A673 (cell line): ENCODE measurements at regions of chr15 and their contacts with region 1.

Region 1: DNA sequence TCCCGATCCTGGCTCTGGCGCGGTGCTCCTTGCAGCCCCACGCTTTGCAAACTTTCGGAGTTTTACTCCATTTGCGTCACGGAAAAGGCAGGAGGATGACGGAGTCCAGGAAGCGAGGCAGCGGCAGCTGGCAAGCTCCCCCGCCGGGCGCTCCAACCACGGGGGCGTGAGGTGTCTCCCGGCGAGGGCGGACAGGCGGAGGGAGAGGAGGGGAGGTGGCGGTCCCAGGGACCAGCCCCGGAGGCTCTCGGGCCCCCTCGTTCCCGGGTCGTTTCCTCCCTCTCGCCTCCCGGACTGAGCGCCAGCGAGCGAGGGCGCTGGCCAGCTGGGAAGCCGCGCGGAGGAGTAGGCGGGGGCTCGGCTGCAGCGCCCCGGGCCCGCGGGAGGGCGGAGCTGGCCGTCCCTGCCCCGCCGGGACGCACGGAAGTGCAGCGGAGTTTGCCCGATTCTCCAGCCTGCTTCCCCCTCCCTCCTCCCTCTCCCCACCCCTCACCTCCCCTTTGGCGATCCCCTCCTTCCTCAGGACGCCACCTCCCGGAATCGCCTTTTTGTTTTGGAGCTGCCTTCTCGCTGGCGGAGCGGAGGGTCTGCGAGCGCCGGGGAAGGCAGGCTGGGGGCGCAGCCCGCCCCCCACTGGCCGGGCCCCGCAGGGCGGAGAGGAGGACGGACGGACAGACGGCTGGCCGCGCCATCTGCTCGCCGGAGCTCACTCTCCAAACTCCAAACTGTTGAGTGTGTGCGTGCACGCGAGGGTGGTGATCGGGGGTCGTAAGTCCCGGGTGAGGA is at the start of gene SNX33:
- DNase-seq: peak; percentile 77
- H3K4me3 ChIP-seq: peak within 1 kb of the TSS; percentile 96
- H3K27ac ChIP-seq: peak within 1 kb of the TSS; percentile 76
- H3K4me1 ChIP-seq: peaks cover 6% of the 10 kb centered on the region
- H3K27me3 ChIP-seq: no peaks in the 10 kb centered on the region
- CTCF ChIP-seq: peak; percentile 66
- total RNA-seq, gene SNX33: 3.4 and 5.6 TPM in 2 replicates

Region 2: GRCh38 chr15:75831571-75831979 is 184.0 kb after region 1 on chr15:
- CTCF ChIA-PET with region 1: no interaction called
- POLR2A ChIA-PET with region 1: no interaction called
- intact Hi-C with region 1: no loop called
- DNase-seq: no peak
- H3K4me3 ChIP-seq: no peak overlapping the region
- H3K27ac ChIP-seq: no peak overlapping the region
- H3K4me1 ChIP-seq: no peaks in the 10 kb centered on the region
- H3K27me3 ChIP-seq: no peaks in the 10 kb centered on the region
- CTCF ChIP-seq: no peak

Region 3: DNA sequence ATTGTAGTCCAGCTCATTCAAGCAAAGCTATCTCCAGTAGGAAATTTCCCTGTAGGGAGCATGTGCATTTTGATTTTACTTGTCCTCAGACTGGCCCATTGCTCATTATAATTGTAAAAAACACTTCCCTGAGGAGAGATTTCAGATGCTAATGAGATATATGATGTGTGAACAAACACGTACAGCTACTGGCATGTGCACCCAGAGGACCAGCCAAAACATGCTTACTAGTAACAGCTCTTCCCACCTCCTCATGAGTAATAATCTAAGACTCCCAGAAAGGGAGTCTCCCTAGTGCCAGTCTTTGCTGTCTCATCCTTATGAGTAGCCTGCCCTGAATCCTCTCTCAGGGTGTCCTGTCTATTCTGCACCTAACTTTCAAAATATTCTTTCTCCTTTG is 299.5 kb after region 1 on chr15:
- CTCF ChIA-PET with region 1: no interaction called
- POLR2A ChIA-PET with region 1: interaction called, 13 read pairs
- intact Hi-C with region 1: no loop called
- DNase-seq: peak; percentile 52
- H3K4me3 ChIP-seq: no peak overlapping the region
- H3K27ac ChIP-seq: no peak overlapping the region
- H3K4me1 ChIP-seq: no peaks in the 10 kb centered on the region
- H3K27me3 ChIP-seq: no peaks in the 10 kb centered on the region
- CTCF ChIP-seq: no peak